ENCODE measurements at regions of chr11 and their contacts with region 1.

Region 1: DNA sequence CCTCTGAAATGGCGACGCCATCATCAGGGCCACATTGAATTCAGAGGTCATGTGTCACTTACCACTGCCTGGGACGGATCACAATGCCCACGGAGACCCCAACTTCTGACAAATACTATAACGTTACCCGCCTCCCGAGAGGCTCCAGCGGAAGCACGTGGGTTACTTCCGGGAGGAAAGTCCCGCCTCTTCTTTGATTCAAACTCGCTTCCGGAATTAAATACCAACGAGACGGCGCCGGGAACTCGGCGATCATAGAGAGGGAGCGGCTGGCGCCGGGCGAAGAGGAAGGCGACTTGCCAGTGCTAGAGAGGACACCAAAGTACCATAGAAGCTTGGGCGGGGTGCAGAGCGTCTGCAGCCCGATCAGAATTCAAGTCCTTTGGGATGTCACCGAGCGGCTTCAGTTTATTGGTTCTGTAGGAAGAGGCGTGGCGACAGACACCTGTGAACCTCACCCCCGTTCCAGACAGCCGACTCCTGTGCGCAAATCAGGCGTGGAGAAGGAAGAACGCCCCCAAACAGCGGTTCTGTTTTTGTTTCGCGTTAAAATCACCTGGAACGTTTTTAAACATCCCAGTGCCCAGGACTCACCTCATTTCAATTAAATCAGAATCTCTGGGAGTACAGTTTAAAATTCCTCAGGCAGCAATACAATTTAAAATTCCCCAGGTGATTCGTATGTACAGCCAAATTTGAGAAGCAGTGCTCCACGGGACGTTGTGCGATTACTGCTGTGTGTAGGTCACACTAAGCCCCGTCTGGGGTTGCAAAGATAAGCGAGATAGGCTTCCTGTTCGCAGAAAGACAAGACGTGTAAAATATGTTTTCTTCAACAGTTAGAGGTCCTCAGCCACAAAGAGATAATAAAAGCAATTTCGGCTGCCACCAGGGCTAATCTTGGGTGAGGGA is at the start of gene TIMM10:
- DNase-seq: peak; percentile 77
- ATAC-seq: peak; percentile 96
- H3K4me3 Mint-ChIP-seq: peak within 1 kb of the TSS; percentile 94
- H3K27ac Mint-ChIP-seq: peak within 1 kb of the TSS; percentile 90
- H3K4me1 Mint-ChIP-seq: peaks cover 25% of the 10 kb centered on the region
- H3K27me3 Mint-ChIP-seq: no peaks in the 10 kb centered on the region
- CTCF ChIP-seq: no peak
- total RNA-seq, gene TIMM10: 100 and 108 TPM in 2 replicates

Region 2: GRCh38 chr11:56251954-56252353 is 1278.9 kb before region 1 on chr11 and contains the start of gene OR5T3:
- CTCF ChIA-PET with region 1: no interaction called
- POLR2A ChIA-PET with region 1: no interaction called
- intact Hi-C with region 1: no loop called
- DNase-seq: no peak
- ATAC-seq: no peak
- H3K4me3 Mint-ChIP-seq: no peak within 1 kb of the TSS
- H3K27ac Mint-ChIP-seq: no peak within 1 kb of the TSS
- H3K4me1 Mint-ChIP-seq: no peaks in the 10 kb centered on the region
- H3K27me3 Mint-ChIP-seq: no peaks in the 10 kb centered on the region
- CTCF ChIP-seq: no peak
- total RNA-seq, gene OR5T3: not detected in 2 replicates

Region 3: GRCh38 chr11:57335343-57336110 is 195.3 kb before region 1 on chr11 and contains the start of gene SSRP1:
- CTCF ChIA-PET with region 1: no interaction called
- POLR2A ChIA-PET with region 1: interaction called, 6 read pairs
- intact Hi-C with region 1: loop called (anchors 1 kb)
- DNase-seq: peak; percentile 77
- ATAC-seq: peak; percentile 97
- H3K4me3 Mint-ChIP-seq: peak within 1 kb of the TSS; percentile 94
- H3K27ac Mint-ChIP-seq: peak within 1 kb of the TSS; percentile 98
- H3K4me1 Mint-ChIP-seq: peaks cover 27% of the 10 kb centered on the region
- H3K27me3 Mint-ChIP-seq: peaks cover 2% of the 10 kb centered on the region
- CTCF ChIP-seq: no peak
- total RNA-seq, gene SSRP1: 120 and 127 TPM in 2 replicates

Region 4: DNA sequence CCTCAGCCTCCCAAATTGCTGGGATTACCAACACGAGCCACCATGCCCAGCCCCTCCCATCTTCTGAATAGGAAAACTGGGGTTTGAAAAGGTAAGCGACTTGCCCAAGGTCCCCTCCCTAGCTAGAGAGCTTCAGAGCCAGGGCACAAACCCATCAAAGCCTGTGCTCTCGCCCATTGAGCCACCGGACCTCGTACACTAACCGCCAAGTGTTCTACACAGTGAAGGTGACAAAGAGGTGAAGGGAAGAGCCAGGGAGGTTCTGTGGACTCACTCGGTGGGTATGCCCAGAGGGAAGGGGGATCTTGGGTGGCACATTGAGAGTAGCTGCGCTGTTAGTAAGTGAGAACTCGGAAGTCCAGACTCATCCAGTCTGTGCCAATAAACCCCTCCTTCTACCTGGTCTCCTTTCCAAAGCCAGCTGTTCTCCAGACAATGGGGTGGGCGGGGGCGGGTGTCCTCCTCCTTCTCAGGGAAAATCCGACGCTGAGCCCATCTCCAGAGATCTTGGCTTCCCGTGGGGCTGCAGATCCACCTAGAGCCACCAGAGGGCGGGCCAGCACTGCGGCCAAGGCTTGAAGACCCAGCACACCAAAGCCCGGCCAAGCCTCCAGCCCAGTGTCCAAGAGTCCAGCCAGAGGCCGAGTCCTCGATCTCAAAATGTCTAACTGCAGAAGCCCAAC is 73.8 kb before region 1 on chr11:
- CTCF ChIA-PET with region 1: interaction called, 224 read pairs
- POLR2A ChIA-PET with region 1: interaction called, 11 read pairs
- intact Hi-C with region 1: loop called (anchors 1 kb)
- DNase-seq: peak; percentile 76
- ATAC-seq: peak; percentile 76
- H3K4me3 Mint-ChIP-seq: peak overlapping the region; percentile 70
- H3K27ac Mint-ChIP-seq: no peak overlapping the region
- H3K4me1 Mint-ChIP-seq: peaks cover 28% of the 10 kb centered on the region
- H3K27me3 Mint-ChIP-seq: peaks cover 28% of the 10 kb centered on the region
- CTCF ChIP-seq: peak; percentile 93

Region 5: GRCh38 chr11:57515332-57516060 is 15.4 kb before region 1 on chr11 and contains the start of gene SLC43A1:
- CTCF ChIA-PET with region 1: interaction called, 17 read pairs
- POLR2A ChIA-PET with region 1: interaction called, 8 read pairs
- intact Hi-C with region 1: loop called (anchors 1 kb)
- DNase-seq: peak; percentile 27
- ATAC-seq: peak; percentile 29
- H3K4me3 Mint-ChIP-seq: peak within 1 kb of the TSS; percentile 97
- H3K27ac Mint-ChIP-seq: peak within 1 kb of the TSS; percentile 80
- H3K4me1 Mint-ChIP-seq: peaks cover 43% of the 10 kb centered on the region
- H3K27me3 Mint-ChIP-seq: no peaks in the 10 kb centered on the region
- CTCF ChIP-seq: no peak
- total RNA-seq, gene SLC43A1: 11.1 and 12.8 TPM in 2 replicates

Region 6: DNA sequence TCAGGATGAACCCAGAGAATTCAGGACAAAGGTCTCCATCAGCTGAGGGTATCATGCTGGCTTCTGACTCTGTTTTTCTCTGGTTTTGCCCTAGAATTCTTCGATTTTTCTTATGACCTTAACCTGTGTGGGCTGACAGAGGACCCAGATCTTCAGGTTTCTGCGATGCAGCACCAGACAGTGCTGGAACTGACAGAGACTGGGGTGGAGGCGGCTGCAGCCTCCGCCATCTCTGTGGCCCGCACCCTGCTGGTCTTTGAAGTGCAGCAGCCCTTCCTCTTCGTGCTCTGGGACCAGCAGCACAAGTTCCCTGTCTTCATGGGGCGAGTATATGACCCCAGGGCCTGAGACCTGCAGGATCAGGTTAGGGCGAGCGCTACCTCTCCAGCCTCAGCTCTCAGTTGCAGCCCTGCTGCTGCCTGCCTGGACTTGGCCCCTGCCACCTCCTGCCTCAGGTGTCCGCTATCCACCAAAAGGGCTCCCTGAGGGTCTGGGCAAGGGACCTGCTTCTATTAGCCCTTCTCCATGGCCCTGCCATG is 83.5 kb after region 1 on chr11:
- CTCF ChIA-PET with region 1: no interaction called
- POLR2A ChIA-PET with region 1: no interaction called
- intact Hi-C with region 1: no loop called
- DNase-seq: no peak
- ATAC-seq: no peak
- H3K4me3 Mint-ChIP-seq: no peak overlapping the region
- H3K27ac Mint-ChIP-seq: no peak overlapping the region
- H3K4me1 Mint-ChIP-seq: no peaks in the 10 kb centered on the region
- H3K27me3 Mint-ChIP-seq: peaks cover 22% of the 10 kb centered on the region
- CTCF ChIP-seq: no peak

Region 7: DNA sequence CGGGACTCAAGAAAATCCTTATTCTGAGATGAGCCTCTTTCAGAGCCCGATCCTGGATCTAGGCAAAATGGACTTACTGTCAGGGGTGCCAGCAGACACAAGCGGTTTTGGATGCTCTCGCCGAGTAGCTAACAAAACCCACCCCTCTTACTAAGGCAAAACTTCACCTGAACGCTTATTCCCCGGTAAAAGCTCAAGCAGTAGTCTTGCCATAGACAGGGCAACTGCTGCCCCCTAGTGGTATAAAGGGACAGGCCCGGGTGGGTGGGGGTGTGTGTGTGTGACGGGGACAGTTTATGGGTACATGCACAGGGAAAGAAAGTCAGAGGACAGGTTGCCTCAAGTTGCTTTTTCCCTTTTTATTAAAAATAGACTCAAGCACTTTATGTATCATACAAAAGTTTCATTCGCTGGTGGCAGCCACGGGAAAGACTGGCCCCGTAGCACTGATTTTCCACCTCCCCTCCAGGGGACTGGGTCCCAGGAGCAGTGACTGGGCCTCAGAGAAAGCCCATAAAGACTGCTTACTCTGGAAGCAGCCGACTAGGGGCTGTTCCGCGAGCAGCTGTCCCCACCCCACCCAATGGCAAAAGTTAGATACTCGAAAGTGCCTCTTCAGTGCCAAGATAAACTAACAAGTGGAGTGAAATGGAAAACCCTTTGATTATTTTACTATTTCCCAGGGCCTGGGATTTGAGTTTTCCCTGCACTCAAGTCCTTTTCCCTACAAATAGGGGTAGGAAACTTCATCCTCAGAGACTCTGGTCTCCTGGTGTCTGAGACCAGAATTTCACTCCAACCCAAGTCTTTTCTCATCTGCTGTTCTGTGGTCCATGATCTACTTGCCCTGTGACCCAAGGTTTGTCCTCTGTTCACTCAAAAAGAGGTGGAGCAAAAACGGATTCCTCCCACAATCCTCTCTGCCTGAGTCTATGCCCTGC is 114.2 kb after region 1 on chr11:
- CTCF ChIA-PET with region 1: interaction called, 14 read pairs
- POLR2A ChIA-PET with region 1: interaction called, 4 read pairs
- intact Hi-C with region 1: loop called (anchors 1 kb)
- DNase-seq: peak; percentile 65
- ATAC-seq: peak; percentile 82
- H3K4me3 Mint-ChIP-seq: no peak overlapping the region
- H3K27ac Mint-ChIP-seq: no peak overlapping the region
- H3K4me1 Mint-ChIP-seq: peaks cover 40% of the 10 kb centered on the region
- H3K27me3 Mint-ChIP-seq: peaks cover 58% of the 10 kb centered on the region
- CTCF ChIP-seq: no peak

Region 8: GRCh38 chr11:57712256-57713150 is 181.7 kb after region 1 on chr11 and contains the start of gene TMX2:
- CTCF ChIA-PET with region 1: no interaction called
- POLR2A ChIA-PET with region 1: interaction called, 3 read pairs
- intact Hi-C with region 1: loop called (anchors 1 kb)
- DNase-seq: peak; percentile 75
- ATAC-seq: peak; percentile 87
- H3K4me3 Mint-ChIP-seq: peak within 1 kb of the TSS; percentile 98
- H3K27ac Mint-ChIP-seq: peak within 1 kb of the TSS; percentile 96
- H3K4me1 Mint-ChIP-seq: peaks cover 47% of the 10 kb centered on the region
- H3K27me3 Mint-ChIP-seq: no peaks in the 10 kb centered on the region
- CTCF ChIP-seq: no peak
- total RNA-seq, gene TMX2: 53.2 and 53.3 TPM in 2 replicates